ENCODE measurements at regions of chr7 and their contacts with region 1.

Region 1: GRCh38 chr7:16098585-16099179 is 322.7 kb downstream of the CRPPA start:
- DNase-seq: peak in 1 of 2 experiments; percentile 29
- H3K4me3 ChIP-seq: no peak overlapping the region
- H3K4me3 Mint-ChIP-seq: no peak overlapping the region
- H3K27ac Mint-ChIP-seq: peak overlapping the region; percentile 69
- H3K4me1 ChIP-seq: peaks cover 19% of the 10 kb centered on the region
- H3K4me1 Mint-ChIP-seq: peaks cover 29% of the 10 kb centered on the region
- H3K27me3 ChIP-seq: no peaks in the 10 kb centered on the region
- H3K27me3 Mint-ChIP-seq: no peaks in the 10 kb centered on the region
- CTCF ChIP-seq: peak; percentile 63

Region 2: GRCh38 chr7:15764851-15765382 is 333.8 kb before region 1 on chr7:
- CTCF ChIA-PET with region 1: no interaction called
- POLR2A ChIA-PET with region 1: no interaction called
- intact Hi-C with region 1: loop called (anchors 2 kb)
- DNase-seq: peak; percentile 76 to 80
- H3K4me3 ChIP-seq: no peak overlapping the region
- H3K4me3 Mint-ChIP-seq: no peak overlapping the region
- H3K27ac Mint-ChIP-seq: peak overlapping the region; percentile 90
- H3K4me1 ChIP-seq: peaks cover 40% of the 10 kb centered on the region
- H3K4me1 Mint-ChIP-seq: peaks cover 21% of the 10 kb centered on the region
- H3K27me3 ChIP-seq: no peaks in the 10 kb centered on the region
- H3K27me3 Mint-ChIP-seq: no peaks in the 10 kb centered on the region
- CTCF ChIP-seq: no peak

Region 3: DNA sequence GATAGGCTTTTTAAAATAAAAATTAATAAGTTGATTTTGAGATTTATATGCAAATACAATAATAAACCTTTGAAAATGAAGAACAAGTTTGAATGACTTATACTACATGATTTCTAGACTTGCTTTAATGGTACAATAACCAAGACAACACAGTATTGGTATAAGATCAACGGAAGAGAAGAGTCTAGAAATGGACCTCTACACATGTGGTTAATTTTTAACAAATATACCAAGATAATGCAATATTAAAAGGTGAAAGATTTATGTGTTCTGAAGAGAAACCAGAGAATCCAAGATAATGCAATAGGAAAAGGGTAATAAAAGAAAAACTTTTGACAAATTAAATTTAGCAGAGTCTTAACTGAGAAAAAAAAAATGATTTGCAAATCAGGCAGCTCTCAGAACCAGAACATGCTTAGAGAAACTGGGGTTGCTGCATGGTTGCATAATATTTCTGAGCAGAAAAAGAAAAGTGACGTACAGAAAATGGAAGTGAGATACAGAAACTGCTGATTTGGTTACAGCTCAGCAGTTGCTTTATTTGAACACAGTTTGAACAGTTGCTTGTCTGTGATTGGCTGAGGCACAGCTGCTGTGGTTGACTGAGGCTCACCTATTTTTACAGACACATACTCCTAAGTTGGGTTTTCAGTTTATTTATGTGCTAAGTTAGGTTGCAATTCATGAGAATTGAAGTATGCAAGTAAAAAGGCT is 43.3 kb before region 1 on chr7:
- CTCF ChIA-PET with region 1: no interaction called
- POLR2A ChIA-PET with region 1: no interaction called
- intact Hi-C with region 1: no loop called
- DNase-seq: no peak
- H3K4me3 ChIP-seq: no peak overlapping the region
- H3K4me3 Mint-ChIP-seq: no peak overlapping the region
- H3K27ac Mint-ChIP-seq: no peak overlapping the region
- H3K4me1 ChIP-seq: no peaks in the 10 kb centered on the region; the same call in 1 of the 2 replicates
- H3K4me1 Mint-ChIP-seq: no peaks in the 10 kb centered on the region
- H3K27me3 ChIP-seq: no peaks in the 10 kb centered on the region
- H3K27me3 Mint-ChIP-seq: no peaks in the 10 kb centered on the region
- CTCF ChIP-seq: no peak

Region 4: GRCh38 chr7:16078076-16078952 is 20.4 kb before region 1 on chr7:
- CTCF ChIA-PET with region 1: no interaction called
- POLR2A ChIA-PET with region 1: no interaction called
- intact Hi-C with region 1: loop called (anchors 1 kb)
- DNase-seq: peak; percentile 43 to 79
- H3K4me3 ChIP-seq: no peak overlapping the region
- H3K4me3 Mint-ChIP-seq: no peak overlapping the region
- H3K27ac Mint-ChIP-seq: peak overlapping the region; percentile 65
- H3K4me1 ChIP-seq: peaks cover 9% of the 10 kb centered on the region
- H3K4me1 Mint-ChIP-seq: peaks cover 25% of the 10 kb centered on the region
- H3K27me3 ChIP-seq: no peaks in the 10 kb centered on the region
- H3K27me3 Mint-ChIP-seq: no peaks in the 10 kb centered on the region
- CTCF ChIP-seq: peak; percentile 63 to 64

Region 5: GRCh38 chr7:16083931-16084330 is 14.8 kb before region 1 on chr7:
- CTCF ChIA-PET with region 1: no interaction called
- POLR2A ChIA-PET with region 1: no interaction called
- intact Hi-C with region 1: loop called (anchors 1 kb)
- DNase-seq: peak in 1 of 2 experiments; percentile 12
- H3K4me3 ChIP-seq: no peak overlapping the region
- H3K4me3 Mint-ChIP-seq: no peak overlapping the region
- H3K27ac Mint-ChIP-seq: peak overlapping the region; percentile 76
- H3K4me1 ChIP-seq: peaks cover 23% of the 10 kb centered on the region
- H3K4me1 Mint-ChIP-seq: peaks cover 33% of the 10 kb centered on the region
- H3K27me3 ChIP-seq: no peaks in the 10 kb centered on the region
- H3K27me3 Mint-ChIP-seq: no peaks in the 10 kb centered on the region
- CTCF ChIP-seq: no peak

Region 6: GRCh38 chr7:16212610-16213009 is 113.9 kb after region 1 on chr7:
- CTCF ChIA-PET with region 1: no interaction called
- POLR2A ChIA-PET with region 1: no interaction called
- intact Hi-C with region 1: loop called (anchors 5 kb)
- DNase-seq: peak in 1 of 2 experiments; percentile 40
- H3K4me3 ChIP-seq: no peak overlapping the region
- H3K4me3 Mint-ChIP-seq: no peak overlapping the region
- H3K27ac Mint-ChIP-seq: peak overlapping the region; percentile 18
- H3K4me1 ChIP-seq: peaks cover 17% of the 10 kb centered on the region
- H3K4me1 Mint-ChIP-seq: peaks cover 9% of the 10 kb centered on the region
- H3K27me3 ChIP-seq: no peaks in the 10 kb centered on the region
- H3K27me3 Mint-ChIP-seq: no peaks in the 10 kb centered on the region
- CTCF ChIP-seq: no peak

Region 7: GRCh38 chr7:16271990-16272665 is 173.4 kb after region 1 on chr7:
- CTCF ChIA-PET with region 1: no interaction called
- POLR2A ChIA-PET with region 1: no interaction called
- intact Hi-C with region 1: loop called (anchors 1 kb)
- DNase-seq: peak; percentile 45 to 46
- H3K4me3 ChIP-seq: no peak overlapping the region
- H3K4me3 Mint-ChIP-seq: peak overlapping the region; percentile 7
- H3K27ac Mint-ChIP-seq: peak overlapping the region; percentile 59
- H3K4me1 ChIP-seq: peaks cover 23% of the 10 kb centered on the region
- H3K4me1 Mint-ChIP-seq: peaks cover 18% of the 10 kb centered on the region
- H3K27me3 ChIP-seq: no peaks in the 10 kb centered on the region
- H3K27me3 Mint-ChIP-seq: no peaks in the 10 kb centered on the region
- CTCF ChIP-seq: no peak

Measured in Caco-2 (cell line).